ENCODE measurements at regions of chr7 and their contacts with region 1.

Region 1: GRCh38 chr7:1156782-1157535 is 3.0 kb downstream of the ZFAND2A start:
- DNase-seq: no peak
- H3K4me3 Mint-ChIP-seq: no peak overlapping the region
- H3K27ac Mint-ChIP-seq: no peak overlapping the region
- H3K4me1 Mint-ChIP-seq: peaks cover 24% of the 10 kb centered on the region
- H3K27me3 Mint-ChIP-seq: no peaks in the 10 kb centered on the region

Region 2: DNA sequence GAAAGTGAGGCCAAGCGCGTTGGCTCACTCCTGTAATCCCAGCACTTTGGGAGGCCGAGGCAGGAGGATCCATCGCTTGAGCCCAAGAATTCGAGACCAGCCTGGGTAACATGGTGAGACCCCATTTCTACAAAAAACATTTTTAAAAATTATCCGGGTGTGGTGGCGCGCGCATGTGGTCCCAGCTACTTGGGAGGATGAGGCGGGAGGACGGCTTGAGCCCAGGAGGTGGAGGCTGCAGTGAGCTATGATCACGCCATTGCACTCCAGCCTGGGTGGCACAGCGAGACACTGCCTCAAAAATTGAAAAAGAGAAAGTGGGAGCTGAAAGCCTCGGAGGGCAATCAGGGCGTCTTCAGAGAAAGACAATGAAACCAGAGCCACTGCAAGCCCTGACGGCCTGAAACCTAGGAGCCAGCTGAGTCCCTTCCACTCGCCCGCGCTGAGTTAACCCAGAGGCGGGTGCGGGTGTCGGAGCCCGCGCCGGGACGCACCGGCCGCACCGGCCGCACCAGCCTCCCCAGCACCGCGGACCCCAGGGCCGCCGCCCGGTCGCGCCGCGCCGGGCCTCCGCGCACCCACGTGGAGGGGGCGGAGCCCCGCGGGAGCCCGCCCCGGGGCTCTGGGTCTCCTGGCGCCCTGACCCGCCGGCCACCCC is 19.3 kb before region 1 on chr7:
- CTCF ChIA-PET with region 1: interaction called, 14 read pairs
- POLR2A ChIA-PET with region 1: no interaction called
- DNase-seq: no peak
- H3K4me3 Mint-ChIP-seq: peak overlapping the region; percentile 82
- H3K27ac Mint-ChIP-seq: peak overlapping the region; percentile 92
- H3K4me1 Mint-ChIP-seq: peaks cover 14% of the 10 kb centered on the region
- H3K27me3 Mint-ChIP-seq: no peaks in the 10 kb centered on the region

Region 3: GRCh38 chr7:1275451-1276381 is 118.8 kb after region 1 on chr7:
- CTCF ChIA-PET with region 1: no interaction called
- POLR2A ChIA-PET with region 1: no interaction called
- DNase-seq: no peak
- H3K4me3 Mint-ChIP-seq: no peak overlapping the region
- H3K27ac Mint-ChIP-seq: no peak overlapping the region
- H3K4me1 Mint-ChIP-seq: no peaks in the 10 kb centered on the region
- H3K27me3 Mint-ChIP-seq: no peaks in the 10 kb centered on the region

Measured in activated CD4-positive, alpha-beta T cell treated with anti-CD3 and anti-CD28 coated beads, Interleukin-2, amount 10 ng/mL, durations not matched to agents 7 days and 5 days (primary cell).